HEK293T (cell line): ENCODE measurements at regions of chr11 and their contacts with region 1.

Region 1: GRCh38 chr11:4072668-4073285 is 21.8 kb upstream of the RRM1 start:
- DNase-seq: peak; percentile 69

Region 2: DNA sequence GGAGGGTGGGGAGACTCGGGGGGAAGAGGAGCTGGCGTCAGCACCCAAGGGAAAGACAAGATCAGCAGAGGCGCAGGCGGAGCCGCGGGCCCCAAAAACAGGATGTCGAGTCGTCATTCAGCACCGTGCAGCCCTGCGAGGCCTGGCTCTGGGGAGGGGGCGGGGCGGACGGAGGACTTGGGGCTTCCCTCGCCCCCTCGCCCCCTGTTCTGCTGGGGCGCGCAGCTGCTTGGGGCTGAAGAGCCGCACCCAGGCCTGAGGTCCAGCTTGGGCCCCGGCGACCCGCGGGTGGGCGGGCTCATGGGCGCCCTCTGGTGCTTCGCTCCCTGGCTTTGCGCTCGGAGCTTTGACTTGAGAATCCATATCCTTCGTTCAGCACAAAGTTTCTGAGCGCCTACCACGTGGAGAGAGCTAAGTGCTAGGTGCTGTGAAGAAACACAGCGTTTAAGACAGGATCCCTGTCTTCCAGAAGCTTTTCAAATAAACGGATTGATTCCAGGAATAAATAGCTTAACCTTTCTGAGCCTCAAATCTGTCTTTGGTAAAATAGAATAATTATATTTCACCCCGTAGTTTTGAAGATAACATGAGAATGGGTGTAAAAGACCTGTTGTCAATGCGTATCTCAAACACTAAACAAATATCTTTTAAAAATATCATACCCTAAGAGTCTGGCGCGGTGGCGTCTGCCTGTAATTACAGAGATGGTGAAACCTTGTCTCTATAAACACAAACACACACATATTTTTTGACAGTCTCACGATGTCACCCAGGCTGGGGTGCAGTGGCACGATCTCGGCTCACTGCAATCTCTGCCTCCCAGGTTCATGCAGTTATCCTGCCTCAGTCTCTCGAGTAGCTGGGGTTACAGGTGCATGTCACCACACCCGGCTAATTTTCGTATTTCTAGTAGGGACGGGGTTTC is 231.1 kb before region 1 on chr11:
- CTCF ChIA-PET with region 1: interaction called, 31 read pairs
- POLR2A ChIA-PET with region 1: interaction called, 4 read pairs
- DNase-seq: peak; percentile 78

Region 3: GRCh38 chr11:3849297-3849874 is 223.4 kb before region 1 on chr11:
- CTCF ChIA-PET with region 1: interaction called, 71 read pairs
- POLR2A ChIA-PET with region 1: interaction called, 9 read pairs
- DNase-seq: peak; percentile 59

Region 4: GRCh38 chr11:4118107-4118506 is 45.3 kb after region 1 on chr11:
- CTCF ChIA-PET with region 1: no interaction called
- POLR2A ChIA-PET with region 1: no interaction called
- DNase-seq: no peak